Natural killer cell (primary cell): ENCODE measurements at regions of chr2 and their contacts with region 1.

Region 1: DNA sequence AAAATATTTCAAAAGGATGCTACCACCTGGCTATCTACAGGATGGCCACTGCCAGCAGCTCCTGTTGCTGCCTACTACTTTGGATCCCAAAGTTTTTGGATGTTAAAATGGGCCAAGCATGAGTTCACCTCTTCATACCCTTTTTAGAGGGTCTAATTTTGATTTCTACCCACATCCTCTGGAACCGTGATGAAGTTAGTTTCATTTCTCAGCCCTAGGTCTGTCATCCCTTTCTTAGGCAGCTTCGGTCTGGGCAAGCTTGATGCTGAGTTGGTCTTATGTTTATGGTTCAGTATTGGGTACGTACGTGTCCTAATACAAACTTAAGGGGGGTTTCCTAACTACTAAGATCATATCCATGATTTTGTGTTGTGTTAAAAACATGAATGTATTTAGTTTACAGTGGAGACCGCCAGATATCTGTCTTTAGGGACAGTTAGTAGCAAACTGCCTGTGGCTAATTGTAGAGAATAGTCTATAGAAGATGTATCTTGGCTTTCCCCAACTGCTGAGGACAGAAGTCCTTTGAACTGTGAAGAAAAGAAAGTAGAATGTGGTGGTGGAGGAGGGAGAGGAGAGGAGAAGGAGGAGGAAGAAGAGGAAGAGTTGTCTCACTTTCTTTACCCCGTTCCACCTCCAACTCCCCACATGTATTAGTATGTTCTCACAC is 184.9 kb downstream of the UBE2E3 start:
- DNase-seq: peak in 1 of 2 donors; percentile 72
- ATAC-seq: peak; percentile 76 to 85 (median 79)
- H3K4me3 ChIP-seq: no peak overlapping the region
- H3K4me3 Mint-ChIP-seq: peak overlapping the region; percentile 66
- H3K27ac ChIP-seq: peak overlapping the region; percentile 89
- H3K27ac Mint-ChIP-seq: peak overlapping the region; percentile 95 to 96
- H3K4me1 ChIP-seq: peaks cover 28% of the 10 kb centered on the region
- H3K4me1 Mint-ChIP-seq: peaks cover 57 to 61% of the 10 kb centered on the region in 2 donors
- H3K27me3 ChIP-seq: no peaks in the 10 kb centered on the region
- H3K27me3 Mint-ChIP-seq: no peaks in the 10 kb centered on the region
- CTCF ChIP-seq: no peak

Region 2: DNA sequence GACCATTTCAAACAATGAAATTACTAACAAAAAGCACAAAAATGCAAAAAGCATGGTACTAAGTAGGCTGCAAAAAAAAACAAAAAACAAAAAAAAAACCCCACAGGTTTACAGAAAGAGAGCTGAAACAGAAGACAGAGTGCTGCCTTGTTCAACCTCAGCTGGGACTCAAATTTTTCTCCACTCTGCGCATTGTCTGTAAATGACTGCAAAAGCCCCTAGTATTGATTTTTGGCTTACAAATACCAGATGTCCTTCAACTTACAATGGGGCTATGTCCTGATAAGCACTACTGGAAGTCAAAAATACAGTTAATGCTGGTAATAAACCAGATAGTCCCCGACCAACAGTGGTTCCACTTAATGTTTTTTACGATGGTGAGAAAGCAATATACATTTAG is 142.7 kb before region 1 on chr2:
- intact Hi-C with region 1: no loop called
- DNase-seq: no peak
- ATAC-seq: no peak
- H3K4me3 ChIP-seq: no peak overlapping the region
- H3K4me3 Mint-ChIP-seq: no peak overlapping the region
- H3K27ac ChIP-seq: no peak overlapping the region
- H3K27ac Mint-ChIP-seq: no peak overlapping the region
- H3K4me1 ChIP-seq: no peaks in the 10 kb centered on the region
- H3K4me1 Mint-ChIP-seq: peaks cover 40 to 52% of the 10 kb centered on the region in 2 donors
- H3K27me3 ChIP-seq: no peaks in the 10 kb centered on the region
- H3K27me3 Mint-ChIP-seq: no peaks in the 10 kb centered on the region
- CTCF ChIP-seq: no peak

Region 3: DNA sequence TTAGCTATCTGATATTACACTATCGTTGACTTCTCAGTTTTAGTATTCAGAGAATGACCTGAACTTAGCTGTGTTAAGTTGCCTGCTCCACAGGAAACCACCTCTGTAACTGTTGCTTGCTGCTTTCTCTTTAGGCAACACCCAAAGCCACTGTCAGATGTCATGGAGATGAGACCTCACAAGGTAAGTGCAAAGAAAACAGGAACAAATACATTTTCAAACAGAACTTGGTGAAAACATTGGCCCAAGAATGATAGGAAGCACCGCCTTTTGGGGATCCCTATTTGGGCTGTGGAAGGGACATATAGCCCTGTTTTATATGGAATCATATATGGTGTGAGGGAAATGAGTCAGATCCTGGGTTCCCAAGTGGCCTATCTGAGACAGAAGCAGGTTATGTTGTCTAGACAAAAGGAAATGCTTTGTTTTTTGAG is 41.5 kb before region 1 on chr2:
- intact Hi-C with region 1: loop called (anchors 1 kb)
- DNase-seq: peak; percentile 39 to 91
- ATAC-seq: peak; percentile 89 to 98 (median 97)
- H3K4me3 ChIP-seq: no peak overlapping the region
- H3K4me3 Mint-ChIP-seq: peak overlapping the region; percentile 66
- H3K27ac ChIP-seq: peak overlapping the region; percentile 97
- H3K27ac Mint-ChIP-seq: peak overlapping the region; percentile 96 to 99
- H3K4me1 ChIP-seq: peaks cover 9% of the 10 kb centered on the region
- H3K4me1 Mint-ChIP-seq: peaks cover 61% of the 10 kb centered on the region in 2 donors
- H3K27me3 ChIP-seq: no peaks in the 10 kb centered on the region
- H3K27me3 Mint-ChIP-seq: no peaks in the 10 kb centered on the region
- CTCF ChIP-seq: no peak

Region 4: DNA sequence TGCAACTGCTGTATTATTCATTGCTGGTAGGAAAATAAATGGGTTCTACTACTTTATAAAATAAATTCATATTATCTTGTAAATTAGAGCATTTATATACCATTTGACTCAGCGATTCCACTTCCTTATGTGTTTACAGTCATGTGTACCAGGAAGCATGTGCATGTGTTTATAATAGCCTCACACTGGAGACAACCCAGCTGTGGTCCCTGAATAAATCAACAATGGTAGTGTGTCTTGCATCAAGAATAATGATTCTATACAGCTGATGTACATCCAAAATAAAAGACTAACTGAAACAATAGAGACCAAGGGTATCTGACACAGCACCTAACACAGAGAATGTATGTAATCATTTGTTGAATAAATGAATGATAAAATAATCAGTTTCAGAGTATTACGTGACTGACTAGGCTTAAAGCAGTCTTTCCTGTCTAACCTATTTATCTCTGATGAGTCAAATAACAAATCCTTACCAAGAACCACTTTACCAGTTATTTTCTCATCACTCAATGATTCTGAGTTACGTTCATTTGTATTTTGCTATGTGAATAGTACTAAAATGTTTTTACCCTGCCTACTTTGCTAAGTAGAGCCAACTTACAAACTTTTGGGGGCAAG is 31.9 kb after region 1 on chr2:
- intact Hi-C with region 1: loop called (anchors 5 kb)
- DNase-seq: no peak
- ATAC-seq: peak in 2 of 3 donors; percentile 42 to 49
- H3K4me3 ChIP-seq: no peak overlapping the region
- H3K4me3 Mint-ChIP-seq: peak overlapping the region; percentile 30
- H3K27ac ChIP-seq: peak overlapping the region; percentile 37
- H3K27ac Mint-ChIP-seq: peak overlapping the region; percentile 78 to 83
- H3K4me1 ChIP-seq: no peaks in the 10 kb centered on the region
- H3K4me1 Mint-ChIP-seq: peaks cover 61 to 65% of the 10 kb centered on the region in 2 donors
- H3K27me3 ChIP-seq: no peaks in the 10 kb centered on the region
- H3K27me3 Mint-ChIP-seq: no peaks in the 10 kb centered on the region
- CTCF ChIP-seq: no peak

Region 5: DNA sequence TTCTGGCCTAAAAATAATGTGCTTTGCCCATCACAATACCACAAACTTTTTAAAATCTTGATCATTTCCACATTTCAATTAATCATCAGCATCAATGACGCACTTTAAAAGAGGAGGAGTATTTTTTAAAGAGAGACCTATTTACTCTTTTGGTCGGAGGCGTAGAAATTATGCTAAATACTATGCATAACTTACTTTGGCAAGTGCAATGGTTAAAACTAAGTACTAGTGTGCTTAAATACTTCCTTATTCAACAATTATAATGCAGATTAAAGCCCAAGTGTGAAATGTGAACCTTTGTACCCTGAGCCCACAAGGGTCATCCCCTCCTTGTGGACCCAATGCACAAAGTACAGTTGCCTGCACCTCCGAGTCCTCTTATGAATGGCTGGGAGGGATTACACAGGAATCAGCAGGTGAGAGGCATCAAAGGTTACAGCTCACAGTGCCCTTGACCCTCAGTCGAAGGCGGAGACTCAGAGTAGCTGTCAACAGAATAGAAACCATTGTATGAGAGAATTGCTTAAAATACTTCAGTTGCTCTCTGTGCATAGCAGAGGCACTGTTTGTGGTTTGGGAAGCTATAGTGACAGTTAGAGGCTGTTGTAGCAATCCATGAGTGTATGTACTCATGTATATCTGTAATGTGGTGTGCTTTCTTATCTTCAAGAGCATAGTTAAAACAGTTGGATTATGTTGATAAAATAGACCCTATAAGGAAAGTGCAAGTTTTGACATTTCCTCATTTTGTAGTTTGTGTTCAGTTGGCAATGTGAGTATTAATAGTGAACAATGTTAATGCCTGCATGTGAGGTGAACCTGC is 140.2 kb after region 1 on chr2:
- intact Hi-C with region 1: loop called (anchors 5 kb)
- DNase-seq: peak in 1 of 2 donors; percentile 69
- ATAC-seq: peak; percentile 56 to 78 (median 69)
- H3K4me3 ChIP-seq: no peak overlapping the region
- H3K4me3 Mint-ChIP-seq: peak overlapping the region; percentile 82
- H3K27ac ChIP-seq: peak overlapping the region; percentile 85
- H3K27ac Mint-ChIP-seq: peak overlapping the region; percentile 94 to 97
- H3K4me1 ChIP-seq: peaks cover 26% of the 10 kb centered on the region
- H3K4me1 Mint-ChIP-seq: peaks cover 71 to 72% of the 10 kb centered on the region in 2 donors
- H3K27me3 ChIP-seq: no peaks in the 10 kb centered on the region
- H3K27me3 Mint-ChIP-seq: no peaks in the 10 kb centered on the region
- CTCF ChIP-seq: no peak